ENCODE measurements at regions of chr10 and their contacts with region 1.

Region 1: GRCh38 chr10:18140149-18140956 is at the start of gene CACNB2:
- DNase-seq: peak; percentile 86
- ATAC-seq: peak; percentile 72
- total RNA-seq, gene CACNB2: 55.9 TPM

Region 2: DNA sequence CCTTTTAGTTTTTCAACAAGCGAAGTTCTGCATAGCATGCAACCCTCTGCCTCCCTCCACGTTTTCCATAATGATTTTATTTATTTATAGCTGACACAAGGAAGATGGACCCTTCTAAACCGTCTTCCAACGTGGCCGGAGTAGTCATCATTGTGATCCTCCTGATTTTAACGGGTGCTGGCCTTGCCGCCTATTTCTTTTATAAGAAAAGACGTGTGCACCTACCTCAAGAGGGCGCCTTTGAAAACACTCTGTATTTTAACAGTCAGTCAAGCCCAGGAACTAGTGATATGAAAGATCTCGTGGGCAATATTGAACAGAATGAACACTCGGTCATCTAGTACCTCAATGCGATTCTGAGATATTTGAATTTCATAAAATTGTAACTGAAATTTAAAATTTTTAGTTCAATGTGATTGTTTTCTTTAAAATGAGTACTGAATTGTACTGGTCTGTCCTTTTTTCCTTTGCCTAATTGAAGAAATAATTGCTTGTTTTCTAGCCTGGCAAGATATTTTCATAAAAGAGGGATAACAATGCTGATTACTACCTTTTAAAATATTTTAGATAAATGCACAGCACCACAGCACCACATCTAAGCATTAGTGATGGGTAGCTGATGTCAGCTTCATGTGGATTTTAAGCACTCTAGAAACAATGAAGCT is 230.1 kb before region 1 on chr10:
- intact Hi-C with region 1: loop called (anchors 5 kb)
- DNase-seq: no peak
- ATAC-seq: no peak